Posterior vena cava (tissue), 2 donors: ENCODE measurements at regions of chr5 and their contacts with region 1.

Region 1: DNA sequence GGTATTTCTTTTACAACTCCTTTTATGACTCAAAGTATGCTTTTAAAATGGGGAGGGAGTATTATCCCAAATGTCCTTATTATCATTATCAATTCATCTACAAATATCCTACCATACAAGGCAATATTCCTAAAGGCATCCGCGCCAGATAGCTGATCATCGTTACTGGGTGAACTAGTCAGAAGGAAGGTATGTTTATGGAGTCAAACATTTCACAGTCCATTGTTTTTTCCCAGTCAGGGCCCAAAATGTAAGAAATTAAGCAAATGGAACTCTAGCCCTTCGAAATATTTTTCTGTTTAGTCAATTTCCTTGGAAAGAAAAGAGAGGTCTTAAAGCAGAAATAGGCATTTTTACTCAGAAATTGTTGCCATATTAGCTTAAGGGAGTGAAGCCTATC is 188.5 kb upstream of the CCNG1 start:
- DNase-seq: no peak

Region 2: GRCh38 chr5:161900981-161901380 is 1347.9 kb before region 1 on chr5:
- intact Hi-C with region 1: no loop called
- DNase-seq: no peak

Region 3: GRCh38 chr5:162956570-162956969 is 292.3 kb before region 1 on chr5:
- intact Hi-C with region 1: no loop called
- DNase-seq: no peak

Region 4: DNA sequence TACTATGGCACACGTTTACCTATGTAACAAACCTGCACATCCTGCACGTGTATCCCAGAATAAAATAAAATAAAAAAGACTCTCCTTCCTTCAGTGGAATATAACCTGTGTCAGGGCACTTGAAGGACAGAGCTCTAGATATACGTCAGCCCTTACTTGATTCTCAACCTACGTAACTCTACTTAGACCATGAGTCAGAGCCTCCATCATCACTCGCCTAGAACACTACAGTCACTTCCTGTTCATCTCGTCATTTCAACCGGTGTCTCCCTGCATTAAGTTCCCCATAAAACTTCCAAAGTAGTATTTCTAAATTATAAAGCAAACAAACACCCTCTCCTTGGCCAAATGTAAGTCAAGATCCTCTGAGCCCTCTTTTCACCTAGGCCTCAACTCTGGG is 55.0 kb before region 1 on chr5:
- intact Hi-C with region 1: loop called in 1 of 2 experiments (anchors 2 kb)
- DNase-seq: no peak